Breast epithelium (tissue), 4 donors: ENCODE measurements at regions of chr19 and their contacts with region 1.

Region 1: GRCh38 chr19:51651216-51651846 is 4.7 kb upstream of the SIGLEC14 start:
- DNase-seq: no peak
- H3K4me3 ChIP-seq: no peak overlapping the region
- H3K27ac ChIP-seq: no peak overlapping the region
- H3K4me1 ChIP-seq: no peaks in the 10 kb centered on the region
- H3K27me3 ChIP-seq: peaks cover 0 to 17% of the 10 kb centered on the region in 2 donors
- CTCF ChIP-seq: no peak
- POLR2A ChIP-seq: no peak

Region 2: DNA sequence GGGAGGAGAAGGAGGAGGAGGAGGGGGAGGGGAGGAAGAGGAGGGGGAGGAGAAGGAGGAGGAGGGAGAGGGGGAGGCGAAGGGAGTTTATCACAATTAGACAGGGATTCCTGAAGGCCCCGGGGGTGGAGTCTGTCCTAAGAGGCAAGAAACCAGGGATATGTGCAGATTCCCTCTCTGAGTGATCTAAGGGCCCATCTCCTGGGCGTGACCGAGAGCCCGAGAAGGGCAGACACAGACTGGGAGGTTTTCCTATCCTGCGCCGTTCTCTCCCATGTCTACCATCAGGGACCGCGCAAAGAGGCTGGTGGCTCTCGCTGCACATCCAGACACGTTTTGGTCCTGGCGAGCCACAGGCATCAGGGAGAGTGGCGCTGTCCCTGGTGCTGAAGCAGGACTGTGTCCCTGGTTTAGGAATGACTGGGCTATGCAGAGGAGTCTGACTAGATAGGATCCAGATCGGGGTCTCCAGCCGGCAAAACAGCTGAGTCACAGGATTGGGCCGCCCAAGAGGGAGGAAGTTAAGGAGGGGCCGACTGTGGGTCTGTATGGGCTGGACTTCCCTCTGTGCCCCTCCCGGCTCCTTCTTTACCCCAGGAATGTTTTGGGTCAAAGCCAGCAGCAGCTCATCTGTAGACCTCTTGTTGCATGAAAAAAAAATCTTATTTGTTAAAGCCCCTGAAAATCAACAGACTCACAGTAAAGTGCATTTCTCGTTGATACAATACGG is 98.2 kb before region 1 on chr19:
- intact Hi-C with region 1: no loop called
- DNase-seq: peak in 1 of 2 donors; percentile 63
- H3K4me3 ChIP-seq: no peak overlapping the region
- H3K27ac ChIP-seq: no peak overlapping the region
- H3K4me1 ChIP-seq: no peaks in the 10 kb centered on the region
- H3K27me3 ChIP-seq: peaks cover 0 to 28% of the 10 kb centered on the region in 2 donors
- CTCF ChIP-seq: no peak
- POLR2A ChIP-seq: no peak

Region 3: GRCh38 chr19:52409941-52410675 is 758.8 kb after region 1 on chr19:
- intact Hi-C with region 1: loop called (anchors 5 kb)
- DNase-seq: no peak
- H3K4me3 ChIP-seq: peak overlapping the region in 1 of 3 donors; percentile 22
- H3K27ac ChIP-seq: no peak overlapping the region
- H3K4me1 ChIP-seq: no peaks in the 10 kb centered on the region
- H3K27me3 ChIP-seq: no peaks in the 10 kb centered on the region
- CTCF ChIP-seq: no peak
- POLR2A ChIP-seq: no peak